ENCODE measurements at regions of chr17 and their contacts with region 1.

Region 1: DNA sequence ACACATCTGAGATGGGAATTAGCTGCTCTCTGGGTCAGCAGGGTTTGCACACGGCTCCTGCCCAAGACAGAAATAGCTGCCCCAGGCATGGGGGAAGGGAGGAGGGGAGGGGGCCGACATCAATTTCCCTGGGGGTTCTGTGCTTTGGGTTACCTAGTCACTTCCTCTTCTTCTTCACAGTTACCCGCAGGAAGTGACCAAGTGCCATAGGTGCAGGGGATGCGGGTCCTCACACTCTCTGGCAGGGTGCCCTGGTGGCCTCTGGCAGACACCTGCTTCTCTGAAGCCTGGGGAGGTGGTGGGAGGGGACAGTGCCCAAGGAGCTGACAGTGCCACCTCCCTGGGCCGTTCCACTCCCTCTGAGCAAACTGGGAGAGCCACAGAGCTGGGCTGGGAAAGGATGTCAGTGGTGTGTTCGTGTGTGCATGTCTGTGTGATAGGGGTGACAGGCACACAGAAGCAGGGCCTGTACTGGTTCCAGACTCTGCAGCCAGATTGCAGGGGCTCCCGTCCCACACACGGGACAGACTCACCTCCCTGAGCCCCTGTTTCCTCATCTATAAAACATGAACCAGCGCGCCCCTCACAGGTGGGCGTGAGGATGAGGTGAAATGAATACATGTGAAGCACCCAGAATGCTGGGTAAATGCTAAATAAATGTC is 18.2 kb downstream of the SCN4A start:
- DNase-seq: peak; percentile 50
- ATAC-seq: peak; percentile 86
- H3K4me3 Mint-ChIP-seq: peak overlapping the region; percentile 77
- H3K27ac Mint-ChIP-seq: peak overlapping the region; percentile 94
- H3K4me1 Mint-ChIP-seq: peaks cover 37% of the 10 kb centered on the region
- H3K27me3 Mint-ChIP-seq: no peaks in the 10 kb centered on the region
- CTCF ChIP-seq: no peak

Region 2: GRCh38 chr17:63931099-63931561 is 23.4 kb before region 1 on chr17:
- CTCF ChIA-PET with region 1: interaction called, 8 read pairs
- POLR2A ChIA-PET with region 1: interaction called, 29 read pairs
- intact Hi-C with region 1: no loop called
- DNase-seq: peak; percentile 67
- ATAC-seq: peak; percentile 45
- H3K4me3 Mint-ChIP-seq: peak overlapping the region; percentile 98
- H3K27ac Mint-ChIP-seq: peak overlapping the region; percentile 96
- H3K4me1 Mint-ChIP-seq: peaks cover 89% of the 10 kb centered on the region
- H3K27me3 Mint-ChIP-seq: no peaks in the 10 kb centered on the region
- CTCF ChIP-seq: no peak

Region 3: DNA sequence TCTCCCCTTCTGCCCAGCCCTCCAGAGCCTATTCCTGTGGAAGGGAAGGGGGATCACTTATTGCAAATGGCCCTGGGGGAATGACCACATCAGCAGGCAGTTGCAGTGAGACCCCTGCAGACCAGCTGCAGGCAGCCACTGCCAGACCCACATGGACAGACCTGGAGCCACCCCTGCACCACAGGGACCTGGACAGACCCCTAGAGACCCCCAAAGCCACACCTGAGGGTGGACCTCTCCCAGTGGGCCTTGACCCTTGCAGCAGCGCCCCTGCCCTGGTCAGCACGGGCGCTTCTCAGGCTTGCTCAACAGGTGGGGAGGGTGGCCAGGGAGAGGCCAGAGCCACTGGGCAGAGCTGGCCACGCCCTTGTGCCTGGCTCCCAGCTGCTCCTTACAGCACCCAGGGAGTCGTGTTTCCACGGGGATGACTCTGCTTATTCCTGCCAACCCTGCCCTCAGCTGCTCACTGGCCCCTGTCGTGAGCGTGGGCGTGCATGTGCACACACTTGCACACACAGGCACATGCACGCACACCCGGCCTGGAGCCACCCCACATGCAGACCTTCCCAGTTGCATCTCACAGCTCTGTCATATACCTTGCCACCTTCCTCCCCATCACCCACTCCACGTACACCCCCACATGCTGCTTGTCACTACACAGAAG is 19.5 kb after region 1 on chr17:
- CTCF ChIA-PET with region 1: no interaction called
- POLR2A ChIA-PET with region 1: interaction called, 3 read pairs
- intact Hi-C with region 1: loop called (anchors 2 kb)
- DNase-seq: no peak
- ATAC-seq: no peak
- H3K4me3 Mint-ChIP-seq: no peak overlapping the region
- H3K27ac Mint-ChIP-seq: no peak overlapping the region
- H3K4me1 Mint-ChIP-seq: peaks cover 4% of the 10 kb centered on the region
- H3K27me3 Mint-ChIP-seq: peaks cover 24% of the 10 kb centered on the region
- CTCF ChIP-seq: no peak

Region 4: GRCh38 chr17:63984651-63985386 is 30.3 kb after region 1 on chr17:
- CTCF ChIA-PET with region 1: interaction called, 9 read pairs
- POLR2A ChIA-PET with region 1: interaction called, 8 read pairs
- intact Hi-C with region 1: loop called (anchors 1 kb)
- DNase-seq: no peak
- ATAC-seq: peak; percentile 89
- H3K4me3 Mint-ChIP-seq: no peak overlapping the region
- H3K27ac Mint-ChIP-seq: no peak overlapping the region
- H3K4me1 Mint-ChIP-seq: peaks cover 16% of the 10 kb centered on the region
- H3K27me3 Mint-ChIP-seq: no peaks in the 10 kb centered on the region
- CTCF ChIP-seq: no peak

Measured in activated B cell treated with CpG ODN at 0.5 μM for 24 hours (primary cell).